Lower leg skin (tissue), 4 donors: ENCODE measurements at regions of chr3 and their contacts with region 1.

Region 1: DNA sequence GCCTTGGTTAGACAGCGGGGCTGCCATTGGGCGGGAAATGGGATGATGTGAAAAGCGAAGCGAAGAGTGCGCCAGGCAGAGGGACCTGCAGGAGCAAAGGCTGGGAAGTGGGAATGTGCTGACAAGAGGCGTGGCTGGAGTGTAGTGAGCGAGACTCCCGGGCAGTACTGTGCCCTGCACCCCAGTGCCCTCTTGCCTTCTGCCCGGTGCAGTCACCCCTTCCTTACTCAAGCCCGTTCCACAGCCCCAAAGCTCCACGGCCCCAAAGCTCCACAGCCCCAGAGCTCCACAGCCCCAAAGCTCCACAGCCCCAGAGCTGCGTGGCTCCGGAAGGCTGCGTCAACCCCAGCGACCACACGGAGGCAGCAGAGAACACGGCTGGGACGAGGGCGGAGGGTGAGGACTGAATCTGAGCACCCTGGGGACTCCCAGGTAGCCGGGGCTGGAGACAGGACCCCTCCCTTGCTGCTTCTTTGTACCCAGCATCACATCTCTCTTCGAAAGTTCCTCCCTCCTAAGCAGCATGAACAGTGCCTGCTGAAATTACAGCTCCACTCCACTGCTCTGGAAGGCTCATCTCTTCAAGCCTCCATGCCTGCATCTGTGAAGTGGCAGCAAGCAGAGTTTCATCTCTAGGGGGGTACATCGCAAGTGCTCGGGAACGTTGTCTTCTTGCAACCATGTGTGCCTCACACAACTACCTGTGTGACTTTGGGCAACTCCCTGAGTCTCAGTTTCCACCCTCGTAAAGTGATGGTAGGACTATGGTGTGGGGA is 108.9 kb downstream of the FBLN2 start:
- DNase-seq: no peak
- H3K4me3 ChIP-seq: no peak overlapping the region
- CTCF ChIP-seq: peak in 1 of 3 donors; percentile 71
- POLR2A ChIP-seq: no peak

Region 2: DNA sequence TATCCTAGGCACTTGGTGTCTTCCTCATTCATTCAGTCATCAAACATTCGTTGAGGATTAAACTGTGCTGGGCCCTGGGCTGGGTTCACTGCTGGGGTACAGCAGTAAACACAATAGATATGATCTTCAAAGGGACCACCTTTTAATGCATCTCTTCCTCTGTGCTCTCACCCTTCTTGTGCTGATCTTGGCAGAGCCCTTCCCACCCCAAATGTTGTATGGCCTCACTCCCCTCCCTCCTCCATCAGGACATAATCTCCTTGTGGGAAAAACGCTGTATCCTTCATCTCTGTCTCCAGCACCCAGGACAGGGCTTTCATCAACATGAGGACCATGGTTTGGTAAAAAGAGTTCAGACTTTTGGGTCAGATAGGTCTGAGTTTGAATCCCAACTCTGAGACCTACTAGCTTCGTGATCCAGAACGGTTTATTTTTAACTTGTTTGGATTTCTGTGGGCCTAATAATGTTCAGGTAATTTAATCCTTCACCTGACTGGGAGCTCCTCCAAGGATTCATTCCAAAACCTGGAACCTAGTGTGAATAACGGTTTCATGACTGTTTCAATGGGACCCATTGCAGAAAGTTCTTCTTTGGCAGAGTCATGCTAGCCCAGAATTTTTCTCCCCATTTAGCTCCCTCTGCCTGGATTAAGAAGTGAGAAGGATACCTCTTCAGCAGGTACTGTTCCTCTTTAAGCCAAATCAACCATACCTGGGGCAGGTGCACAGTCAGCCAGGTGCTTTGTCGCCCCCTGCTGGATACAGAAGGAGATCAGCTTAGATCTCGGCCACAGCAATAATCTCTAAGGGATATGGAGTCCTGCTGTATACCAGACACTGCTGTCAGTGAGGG is 227.2 kb after region 1 on chr3:
- intact Hi-C with region 1: loop called (anchors 2 kb)
- DNase-seq: peak in 1 of 2 donors; percentile 80
- H3K4me3 ChIP-seq: no peak overlapping the region
- CTCF ChIP-seq: no peak
- POLR2A ChIP-seq: no peak